ENCODE measurements at regions of chr10 and their contacts with region 1.

Region 1: GRCh38 chr10:19819419-19820033 is 3.3 kb downstream of the PLXDC2 start:
- DNase-seq: peak in 1 of 3 donors; percentile 86
- ATAC-seq: peak; percentile 41
- H3K4me3 ChIP-seq: no peak overlapping the region
- H3K4me1 ChIP-seq: peaks cover 3% of the 10 kb centered on the region
- CTCF ChIP-seq: peak; percentile 74

Region 2: GRCh38 chr10:18486438-18486837 is 1333.1 kb before region 1 on chr10:
- intact Hi-C with region 1: no loop called
- DNase-seq: no peak
- ATAC-seq: no peak
- H3K4me3 ChIP-seq: no peak overlapping the region
- H3K4me1 ChIP-seq: no peaks in the 10 kb centered on the region
- CTCF ChIP-seq: no peak

Region 3: GRCh38 chr10:19862811-19863515 is 43.4 kb after region 1 on chr10:
- intact Hi-C with region 1: no loop called
- DNase-seq: no peak
- ATAC-seq: no peak
- H3K4me3 ChIP-seq: no peak overlapping the region
- H3K4me1 ChIP-seq: no peaks in the 10 kb centered on the region
- CTCF ChIP-seq: no peak

Region 4: GRCh38 chr10:19918794-19919193 is 99.3 kb after region 1 on chr10:
- intact Hi-C with region 1: no loop called
- DNase-seq: no peak
- ATAC-seq: peak; percentile 29
- H3K4me3 ChIP-seq: no peak overlapping the region
- H3K4me1 ChIP-seq: peaks cover 43% of the 10 kb centered on the region
- CTCF ChIP-seq: no peak

Region 5: DNA sequence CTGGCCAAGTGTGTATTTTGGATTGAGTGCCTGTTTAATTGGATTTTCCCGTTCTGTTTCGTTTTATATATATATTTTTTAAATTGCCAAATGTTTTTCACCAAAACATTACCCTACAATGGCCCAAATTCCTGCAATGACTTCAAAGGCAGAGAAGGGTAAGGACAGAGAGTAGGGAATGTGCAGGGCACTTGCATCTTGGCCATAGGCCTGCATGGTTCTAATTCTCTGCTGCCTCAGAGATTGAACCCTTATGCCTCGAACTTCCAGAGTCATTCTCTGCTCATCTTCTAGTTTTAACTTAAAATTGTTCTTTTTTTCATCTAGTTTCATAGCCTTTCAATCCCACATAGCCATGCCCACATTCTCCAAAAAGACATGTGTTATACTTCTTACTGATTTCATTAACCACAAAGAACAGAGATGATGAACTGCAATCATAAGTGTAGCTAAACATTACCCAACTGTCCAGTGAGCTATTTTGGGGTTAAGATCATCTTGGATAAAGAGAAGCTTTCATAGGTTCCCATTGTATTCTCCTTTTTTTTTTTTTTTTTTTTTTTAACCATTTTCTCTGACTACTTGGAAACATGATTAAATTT is 174.3 kb after region 1 on chr10:
- intact Hi-C with region 1: loop called in 1 of 2 experiments (anchors 10 kb)
- DNase-seq: no peak
- ATAC-seq: no peak
- H3K4me3 ChIP-seq: no peak overlapping the region
- H3K4me1 ChIP-seq: peaks cover 5% of the 10 kb centered on the region
- CTCF ChIP-seq: no peak

Region 6: GRCh38 chr10:20094226-20094976 is 274.9 kb after region 1 on chr10:
- intact Hi-C with region 1: loop called in 1 of 2 experiments (anchors 5 kb)
- DNase-seq: no peak
- ATAC-seq: no peak
- H3K4me3 ChIP-seq: no peak overlapping the region
- H3K4me1 ChIP-seq: peaks cover 4% of the 10 kb centered on the region
- CTCF ChIP-seq: no peak